ENCODE measurements at regions of chr2 and their contacts with region 1.

Region 1: DNA sequence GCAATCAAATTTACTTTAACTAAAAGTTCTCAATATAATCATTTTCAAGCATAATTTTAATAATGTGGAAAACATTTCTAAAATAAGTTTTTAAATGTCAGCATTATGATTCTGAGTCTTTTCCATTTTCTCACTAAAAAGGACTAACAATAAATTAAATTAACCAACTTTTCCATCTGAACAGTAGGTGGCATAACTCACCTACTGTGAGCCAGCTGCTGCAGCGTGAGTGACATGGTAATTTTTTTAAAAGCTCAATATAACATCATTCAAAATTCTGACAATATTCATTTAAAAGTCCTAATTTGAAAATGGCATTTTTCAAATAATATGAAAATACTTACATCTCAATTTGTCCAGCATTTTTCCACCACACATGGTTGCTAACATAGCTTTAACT is 66.5 kb downstream of the DTNB start:
- DNase-seq: no peak
- ATAC-seq: no peak

Region 2: DNA sequence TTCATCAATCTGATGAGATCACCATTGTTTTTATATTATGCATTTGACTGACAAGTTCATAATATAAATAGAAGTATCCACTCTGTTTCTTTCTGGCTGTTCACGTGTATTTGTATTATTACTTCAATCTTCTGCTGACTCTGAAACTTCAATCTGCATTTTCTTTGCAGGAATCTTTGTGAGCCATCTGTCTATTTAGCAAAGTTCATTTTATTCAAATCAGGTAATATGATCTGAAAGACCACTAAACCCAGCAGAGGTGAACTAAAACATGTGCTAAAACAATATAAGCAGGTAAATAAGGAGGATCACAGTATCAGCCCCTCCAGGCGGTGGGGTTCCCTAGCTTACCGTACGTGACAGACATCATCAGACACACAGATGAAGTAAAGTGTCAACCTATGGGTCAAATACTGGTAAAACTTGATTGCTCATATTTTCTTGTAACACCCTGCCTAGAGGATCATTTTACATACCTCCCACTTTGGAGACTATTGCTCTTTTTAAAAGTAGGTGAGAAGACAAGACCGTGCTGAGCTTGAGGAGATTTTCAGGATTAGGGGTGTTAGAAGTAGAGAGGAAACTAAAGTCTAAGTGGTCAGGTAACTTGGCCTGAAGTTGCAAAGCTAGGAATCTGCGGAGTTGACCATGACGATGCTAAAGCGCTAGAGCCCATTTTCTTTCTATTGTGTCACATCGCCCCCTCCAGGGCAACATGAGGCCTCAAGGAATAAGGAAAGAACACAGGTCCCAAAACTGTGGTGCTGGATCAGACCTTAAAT is 57.5 kb after region 1 on chr2:
- intact Hi-C with region 1: loop called (anchors 2 kb)
- DNase-seq: no peak
- ATAC-seq: peak; percentile 46

Region 3: GRCh38 chr2:25677877-25678276 is 71.0 kb after region 1 on chr2:
- intact Hi-C with region 1: no loop called
- DNase-seq: no peak
- ATAC-seq: no peak

Region 4: GRCh38 chr2:25700221-25700660 is 93.3 kb after region 1 on chr2:
- intact Hi-C with region 1: loop called (anchors 5 kb)
- DNase-seq: no peak
- ATAC-seq: no peak

Region 5: GRCh38 chr2:26369381-26370063 is 762.6 kb after region 1 on chr2:
- intact Hi-C with region 1: no loop called
- DNase-seq: no peak
- ATAC-seq: no peak

Measured in Right ventricle myocardium inferior (tissue), 1 donor.